ENCODE measurements at regions of chr4 and their contacts with region 1.

Region 1: DNA sequence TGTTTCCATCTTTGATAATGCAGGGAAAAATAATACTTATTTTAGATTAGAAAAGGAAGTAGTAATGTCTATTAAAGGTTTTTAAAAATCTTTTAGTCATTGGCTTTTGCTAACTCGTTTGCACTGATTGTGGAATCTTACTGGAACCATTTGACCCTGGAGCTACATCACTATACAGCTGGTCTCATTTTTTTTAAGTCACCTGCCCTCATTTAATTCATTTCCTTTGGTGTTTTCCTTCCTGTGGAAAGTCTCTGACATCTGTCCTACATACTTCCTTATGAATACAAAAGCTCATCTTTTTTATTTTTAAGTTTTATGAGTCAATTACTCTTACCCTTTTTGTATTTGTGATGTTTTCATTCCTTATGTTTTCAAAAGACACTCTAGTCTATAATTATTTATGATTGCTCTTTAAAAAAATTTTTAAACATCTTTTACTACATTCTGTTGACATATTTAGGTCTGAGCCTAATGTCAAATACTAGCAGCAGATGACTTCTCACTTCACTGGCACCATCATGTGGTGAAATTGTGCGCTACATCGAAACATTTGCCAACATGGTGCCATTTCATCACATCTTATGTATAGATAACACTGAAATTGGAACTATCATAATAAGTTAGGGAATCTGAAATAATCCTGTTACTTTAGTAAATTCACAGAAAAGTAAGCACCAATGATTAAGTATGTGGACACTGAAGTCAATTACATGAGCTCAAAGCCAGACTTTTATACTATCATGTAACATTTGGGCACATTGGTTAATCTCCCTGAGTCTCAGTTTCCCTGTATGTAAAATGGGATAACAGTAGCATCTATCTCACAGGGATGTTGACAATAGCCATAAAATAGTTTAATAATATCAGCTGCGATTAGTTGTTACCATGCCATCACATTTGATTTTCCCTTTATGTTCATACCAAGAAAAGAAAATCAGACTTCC is 9.4 kb upstream of the MMAA start:
- DNase-seq: peak; percentile 91
- H3K4me3 ChIP-seq: no peak overlapping the region
- H3K27ac ChIP-seq: no peak overlapping the region
- H3K4me1 ChIP-seq: peaks cover 8% of the 10 kb centered on the region
- H3K27me3 ChIP-seq: peaks cover 0 to 10% of the 10 kb centered on the region in 2 experiments
- CTCF ChIP-seq: peak; percentile 60 to 67
- POLR2A ChIP-seq: no peak

Region 2: GRCh38 chr4:145180298-145181090 is 429.3 kb before region 1 on chr4 and contains the start of gene OTUD4:
- CTCF ChIA-PET with region 1: interaction called, 13 read pairs
- POLR2A ChIA-PET with region 1: no interaction called
- dilution Hi-C with region 1: no loop called
- intact Hi-C with region 1: no loop called
- DNase-seq: peak; percentile 96
- H3K4me3 ChIP-seq: peak within 1 kb of the TSS; percentile 78 to 93 (median 92)
- H3K27ac ChIP-seq: peak within 1 kb of the TSS; percentile 78
- H3K4me1 ChIP-seq: peaks cover 18% of the 10 kb centered on the region
- H3K27me3 ChIP-seq: no peaks in the 10 kb centered on the region
- CTCF ChIP-seq: peak in 1 of 2 donors; percentile 25
- POLR2A ChIP-seq: no peak
- total RNA-seq, gene OTUD4: 39.5 and 40.9 TPM in 2 replicates

Region 3: DNA sequence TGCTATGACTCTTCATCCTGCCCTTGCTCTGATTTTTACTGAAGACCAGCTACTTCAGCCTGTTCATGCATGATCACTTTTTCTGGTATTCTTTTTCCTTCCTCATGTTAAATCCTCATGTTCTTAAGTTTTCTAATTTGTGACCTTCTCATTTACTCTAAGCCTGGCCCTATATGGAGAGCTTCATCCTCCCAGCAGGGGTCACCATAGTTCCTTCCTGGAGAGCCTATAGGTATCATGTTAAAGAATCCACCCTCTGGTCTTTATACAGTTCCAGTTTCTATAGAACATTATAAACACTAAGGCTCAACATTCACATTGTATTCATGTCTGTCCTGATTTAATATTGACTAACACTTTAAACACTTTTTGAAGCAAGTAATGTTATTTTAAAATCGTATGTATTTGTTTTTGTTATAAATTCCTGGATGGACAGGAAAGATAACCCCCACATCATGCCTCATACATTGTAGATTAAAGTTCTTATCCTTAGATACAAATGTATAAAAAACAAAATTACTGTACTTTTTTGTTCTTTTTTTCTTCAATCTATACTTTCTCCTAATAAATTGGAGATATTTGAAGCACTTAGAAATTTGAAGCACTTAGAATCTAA is 375.6 kb before region 1 on chr4:
- CTCF ChIA-PET with region 1: interaction called, 138 read pairs
- POLR2A ChIA-PET with region 1: no interaction called
- dilution Hi-C with region 1: no loop called
- intact Hi-C with region 1: loop called (anchors 1 kb)
- DNase-seq: peak; percentile 65
- H3K4me3 ChIP-seq: no peak overlapping the region
- H3K27ac ChIP-seq: no peak overlapping the region
- H3K4me1 ChIP-seq: peaks cover 8% of the 10 kb centered on the region
- H3K27me3 ChIP-seq: no peaks in the 10 kb centered on the region
- CTCF ChIP-seq: peak; percentile 60 to 62
- POLR2A ChIP-seq: no peak

Region 4: DNA sequence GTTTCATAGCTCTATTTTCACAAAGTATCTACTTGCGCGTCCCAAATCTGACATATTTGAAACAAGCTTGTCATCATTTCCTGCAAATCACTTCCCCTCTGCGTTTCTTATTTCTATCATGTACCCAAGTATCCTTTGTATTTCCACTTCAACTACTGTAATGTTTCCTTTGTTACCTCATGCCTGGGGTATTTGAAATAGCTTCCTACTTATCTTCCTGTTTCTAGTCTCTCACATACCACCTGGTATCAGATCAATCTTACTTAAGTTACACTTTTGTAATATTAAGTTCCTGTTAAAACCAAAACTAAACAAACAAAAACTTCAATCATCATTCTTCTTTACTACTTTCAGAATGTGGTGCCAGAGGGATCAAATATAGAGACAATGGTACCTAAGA is 221.7 kb before region 1 on chr4:
- CTCF ChIA-PET with region 1: interaction called, 6 read pairs
- POLR2A ChIA-PET with region 1: no interaction called
- dilution Hi-C with region 1: no loop called
- intact Hi-C with region 1: loop called (anchors 1 kb)
- DNase-seq: peak; percentile 80
- H3K4me3 ChIP-seq: peak overlapping the region in 1 of 3 experiments; percentile 32
- H3K27ac ChIP-seq: peak overlapping the region; percentile 67
- H3K4me1 ChIP-seq: peaks cover 25% of the 10 kb centered on the region
- H3K27me3 ChIP-seq: no peaks in the 10 kb centered on the region
- CTCF ChIP-seq: no peak
- POLR2A ChIP-seq: no peak

Region 5: DNA sequence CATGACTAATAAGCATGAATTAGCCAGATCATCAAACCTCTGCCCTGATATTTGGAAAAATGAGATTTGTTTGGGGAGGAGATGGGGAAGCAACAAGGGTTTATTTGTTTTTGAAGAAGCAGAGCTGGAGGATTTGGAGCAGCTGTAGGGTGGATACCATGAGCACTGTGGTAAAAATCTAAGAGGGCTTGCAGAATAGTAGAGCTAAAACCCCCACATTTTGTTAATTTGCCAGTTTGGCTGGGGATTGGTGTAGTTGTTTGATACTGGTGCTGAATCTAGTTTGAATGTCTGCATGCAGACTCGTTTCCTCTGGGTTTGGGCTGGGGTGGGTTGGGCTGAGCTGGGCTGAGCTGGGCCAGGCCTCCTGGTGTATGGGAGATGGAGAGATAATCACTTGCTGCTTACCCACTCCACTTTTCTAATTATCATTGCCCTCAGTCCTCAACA is 84.4 kb before region 1 on chr4:
- CTCF ChIA-PET with region 1: no interaction called
- POLR2A ChIA-PET with region 1: no interaction called
- dilution Hi-C with region 1: no loop called
- intact Hi-C with region 1: no loop called
- DNase-seq: no peak
- H3K4me3 ChIP-seq: no peak overlapping the region
- H3K27ac ChIP-seq: no peak overlapping the region
- H3K4me1 ChIP-seq: peaks cover 8% of the 10 kb centered on the region
- H3K27me3 ChIP-seq: no peaks in the 10 kb centered on the region
- CTCF ChIP-seq: no peak
- POLR2A ChIP-seq: no peak

Region 6: GRCh38 chr4:145557720-145558119 is 52.0 kb before region 1 on chr4:
- CTCF ChIA-PET with region 1: interaction called, 15 read pairs
- POLR2A ChIA-PET with region 1: no interaction called
- dilution Hi-C with region 1: no loop called
- intact Hi-C with region 1: loop called (anchors 1 kb)
- DNase-seq: peak; percentile 81
- H3K4me3 ChIP-seq: no peak overlapping the region
- H3K27ac ChIP-seq: no peak overlapping the region
- H3K4me1 ChIP-seq: peaks cover 11% of the 10 kb centered on the region
- H3K27me3 ChIP-seq: no peaks in the 10 kb centered on the region
- CTCF ChIP-seq: peak; percentile 88 to 89
- POLR2A ChIP-seq: no peak

Region 7: DNA sequence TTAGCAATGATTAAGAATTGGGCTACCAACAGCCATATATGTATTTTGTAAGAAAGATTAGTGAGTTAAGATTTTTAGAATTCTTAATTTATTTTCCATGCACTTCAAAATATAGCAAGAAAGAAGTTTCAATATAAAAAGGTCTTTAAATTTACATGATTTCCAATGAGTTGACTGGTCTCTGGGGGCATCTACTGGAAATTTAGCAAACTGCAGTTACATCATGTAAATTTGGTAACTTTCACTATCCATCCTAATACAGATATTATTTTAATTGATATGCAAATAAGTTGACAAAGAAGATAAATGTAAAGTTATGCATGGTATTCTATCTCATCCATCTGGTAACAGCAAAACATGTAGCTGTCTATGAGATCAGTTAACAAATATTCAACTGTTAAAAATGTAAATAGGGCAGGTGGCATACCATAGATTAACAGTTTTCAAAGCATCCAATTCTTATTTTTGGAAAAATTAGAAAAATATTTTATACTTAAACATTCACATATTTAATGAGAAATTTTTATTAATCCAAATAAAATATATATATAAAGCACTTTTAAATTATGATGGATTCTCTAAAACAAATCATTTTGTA is 1306.8 kb after region 1 on chr4:
- CTCF ChIA-PET with region 1: no interaction called
- POLR2A ChIA-PET with region 1: no interaction called
- dilution Hi-C with region 1: no loop called
- intact Hi-C with region 1: loop called (anchors 1 kb)
- DNase-seq: peak; percentile 72
- H3K4me3 ChIP-seq: no peak overlapping the region
- H3K27ac ChIP-seq: no peak overlapping the region
- H3K4me1 ChIP-seq: no peaks in the 10 kb centered on the region
- H3K27me3 ChIP-seq: peaks cover 0 to 19% of the 10 kb centered on the region in 2 experiments
- CTCF ChIP-seq: peak; percentile 39 to 49
- POLR2A ChIP-seq: no peak